AG04449 (cell line): ENCODE measurements at regions of chr3 and their contacts with region 1.

Region 1: GRCh38 chr3:122458992-122459391 is 43.1 kb upstream of the WDR5B start:
- DNase-seq: peak; percentile 12
- H3K4me3 ChIP-seq: no peak overlapping the region
- CTCF ChIP-seq: peak; percentile 26

Region 2: DNA sequence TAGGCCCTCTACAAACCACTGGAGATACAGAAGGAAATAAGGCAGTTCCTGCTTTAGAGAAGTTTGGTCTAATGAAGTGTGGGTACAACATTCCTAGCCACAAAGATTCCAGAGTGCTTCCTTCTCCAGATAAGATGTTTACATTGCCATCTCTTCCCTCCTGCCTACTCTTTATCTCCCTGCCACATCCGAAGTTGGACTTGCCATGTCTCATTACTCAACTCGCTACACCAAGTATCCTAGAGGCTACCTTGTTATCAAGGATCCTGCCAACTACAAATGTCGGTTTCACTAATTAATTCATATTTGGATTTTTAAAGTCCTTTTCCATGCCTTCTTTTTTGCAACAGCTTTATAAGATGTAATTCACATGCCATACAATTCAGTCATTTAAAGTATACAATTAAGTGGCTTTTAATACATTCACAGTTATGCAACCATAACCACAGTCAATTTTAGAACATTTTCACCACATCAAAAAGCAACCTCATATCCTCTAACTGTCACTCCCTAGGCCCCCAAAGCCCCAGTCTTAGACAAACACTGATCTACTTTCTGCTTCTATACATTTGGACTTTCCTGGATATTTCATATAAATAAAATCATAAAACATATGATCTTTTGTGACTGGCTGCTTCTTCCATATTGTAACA is 187.6 kb before region 1 on chr3:
- CTCF ChIA-PET with region 1: no interaction called
- POLR2A ChIA-PET with region 1: no interaction called
- DNase-seq: no peak
- H3K4me3 ChIP-seq: no peak overlapping the region
- CTCF ChIP-seq: no peak

Region 3: DNA sequence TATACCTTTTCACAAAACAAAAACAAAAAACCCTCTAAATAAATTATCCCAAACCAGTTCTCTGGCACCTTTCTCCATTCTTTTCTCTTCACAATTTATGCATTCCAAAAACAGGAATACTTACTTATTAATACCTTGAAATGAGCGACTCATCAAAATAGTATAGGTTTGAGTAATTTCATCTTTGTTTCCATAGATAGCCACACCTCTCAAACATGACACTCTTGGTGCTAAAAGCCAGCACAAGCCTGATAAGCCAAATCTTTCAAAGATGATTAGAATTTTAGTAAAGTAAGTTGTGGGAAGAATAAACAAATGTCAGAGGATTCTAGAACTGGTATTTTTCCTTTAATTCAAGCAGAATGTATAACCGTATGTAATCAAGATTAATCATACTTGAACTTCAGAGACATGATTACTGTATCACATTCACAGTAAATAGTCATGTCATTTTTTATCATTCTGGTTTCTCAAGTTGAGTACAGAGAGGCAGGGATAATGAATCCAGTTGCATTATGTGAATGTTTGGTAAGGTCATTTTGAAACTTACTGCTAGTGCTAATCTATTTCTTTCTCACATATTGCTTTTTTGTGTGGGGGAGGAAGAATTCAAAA is 31.0 kb before region 1 on chr3:
- CTCF ChIA-PET with region 1: interaction called, 14 read pairs
- POLR2A ChIA-PET with region 1: no interaction called
- DNase-seq: no peak
- H3K4me3 ChIP-seq: no peak overlapping the region
- CTCF ChIP-seq: no peak

Region 4: DNA sequence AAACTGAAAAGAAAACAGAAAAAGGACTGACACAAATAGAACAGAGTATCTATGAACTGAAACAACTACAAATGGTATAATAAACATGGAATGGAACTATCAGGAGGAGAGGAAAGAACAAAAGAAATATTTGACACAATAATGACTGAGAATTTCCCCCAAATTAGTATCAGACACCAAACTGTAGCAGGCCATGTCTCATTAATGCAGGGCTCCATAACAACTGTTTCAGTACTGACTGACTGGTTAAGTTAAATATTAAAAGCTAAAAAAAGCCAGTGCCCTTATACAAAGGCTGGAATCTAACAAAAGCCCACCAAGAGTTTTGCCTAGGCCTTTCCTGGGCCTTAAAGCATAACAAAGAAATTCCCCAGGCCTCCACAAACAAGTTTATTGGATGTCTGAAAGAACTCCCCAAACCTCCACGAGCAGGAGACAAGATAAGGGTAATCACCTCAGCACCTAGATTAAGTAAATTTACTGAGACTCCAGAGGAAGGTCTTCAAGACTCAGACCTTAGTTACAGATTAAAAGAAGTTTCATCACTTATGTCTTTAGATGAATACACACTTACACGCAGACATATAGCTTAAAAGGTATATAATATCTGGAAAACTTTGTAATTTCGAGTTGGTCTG is 10.0 kb after region 1 on chr3:
- CTCF ChIA-PET with region 1: interaction called, 39 read pairs
- POLR2A ChIA-PET with region 1: no interaction called
- DNase-seq: no peak
- H3K4me3 ChIP-seq: no peak overlapping the region
- CTCF ChIP-seq: no peak

Region 5: GRCh38 chr3:122602011-122602710 is 143.2 kb after region 1 on chr3:
- CTCF ChIA-PET with region 1: no interaction called
- POLR2A ChIA-PET with region 1: no interaction called
- DNase-seq: no peak
- H3K4me3 ChIP-seq: no peak overlapping the region
- CTCF ChIP-seq: no peak